ENCODE measurements at regions of chr7 and their contacts with region 1.

Region 1: DNA sequence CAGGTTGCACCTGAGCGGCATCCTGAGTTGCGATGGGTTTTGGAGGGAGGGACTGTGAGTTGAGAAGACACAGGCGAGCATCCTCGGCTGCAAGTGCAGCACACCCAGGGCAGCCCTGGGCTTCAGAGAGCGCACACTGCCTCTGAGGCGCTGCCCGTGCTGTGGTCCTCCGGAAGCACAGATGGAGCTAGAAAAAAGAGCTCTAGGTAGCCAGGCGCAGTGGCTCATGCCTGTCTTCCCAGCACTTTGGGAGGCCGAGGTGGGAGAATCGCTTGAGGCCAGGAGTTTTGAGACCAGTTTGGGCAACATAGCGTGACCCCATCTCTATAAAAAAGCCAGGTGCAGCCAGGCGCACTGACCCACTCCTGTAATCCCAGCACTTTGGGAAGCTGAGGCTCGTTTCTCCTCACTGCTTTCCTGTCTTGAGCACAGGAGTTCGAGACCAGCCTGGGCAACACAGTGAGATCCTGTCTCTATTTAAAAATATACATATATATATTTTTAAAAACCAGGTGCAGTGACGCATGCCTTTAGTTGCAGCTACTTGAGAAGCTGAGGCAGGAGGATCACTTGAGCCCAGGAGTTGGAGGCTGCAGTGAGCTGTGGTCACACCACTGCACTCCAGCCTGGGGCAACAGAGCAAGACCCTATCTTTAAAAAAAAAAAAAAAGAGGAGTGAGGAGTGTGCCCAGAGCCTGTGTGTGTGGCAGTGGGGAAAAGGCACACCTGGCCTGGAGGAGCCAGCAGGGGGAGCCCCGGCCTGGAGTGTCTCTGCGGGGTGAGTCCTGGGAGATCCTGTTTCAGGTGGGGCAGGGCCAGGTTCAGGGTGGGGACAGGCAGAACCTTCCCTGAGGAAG is 9.3 kb upstream of the ARPC1B start:
- DNase-seq: peak in 1 of 2 experiments; percentile 74
- H3K4me3 ChIP-seq: no peak overlapping the region
- H3K27ac ChIP-seq: no peak overlapping the region
- H3K4me1 ChIP-seq: peaks cover 0 to 9% (median 4%) of the 10 kb centered on the region in 4 experiments; a peak in 5 of 7 replicates
- H3K27me3 ChIP-seq: no peaks in the 10 kb centered on the region
- CTCF ChIP-seq: peak; percentile 63 to 72 (median 71)
- EP300 ChIP-seq: no peak
- POLR2A ChIP-seq: no peak
- RAD21 ChIP-seq: peak; percentile 53 to 59

Region 2: GRCh38 chr7:99386584-99387238 is 21.5 kb after region 1 on chr7:
- CTCF ChIA-PET with region 1: interaction called, 40 read pairs
- POLR2A ChIA-PET with region 1: interaction called, 11 read pairs
- DNase-seq: no peak
- H3K4me3 ChIP-seq: no peak overlapping the region
- H3K27ac ChIP-seq: no peak overlapping the region
- H3K4me1 ChIP-seq: no peaks in the 10 kb centered on the region
- H3K27me3 ChIP-seq: no peaks in the 10 kb centered on the region
- CTCF ChIP-seq: peak in 2 of 3 experiments; percentile 40 to 46; a peak in 3 of 4 replicates
- EP300 ChIP-seq: no peak
- POLR2A ChIP-seq: no peak
- RAD21 ChIP-seq: peak; percentile 43 to 52

Measured in H1 (cell line).